HepG2 (cell line): ENCODE measurements at regions of chr17 and their contacts with region 1.

Region 1: GRCh38 chr17:38351412-38352222 is at the start of gene SOCS7:
- DNase-seq: peak; percentile 95
- ATAC-seq: peak; percentile 89
- H3K4me3 ChIP-seq: peak within 1 kb of the TSS; percentile 91 to 95 (median 94)
- H3K27ac ChIP-seq: peak within 1 kb of the TSS; percentile 73
- H3K4me1 ChIP-seq: peaks cover 63% of the 10 kb centered on the region
- H3K27me3 ChIP-seq: no peaks in the 10 kb centered on the region; a peak in 1 of 5 replicates
- CTCF ChIP-seq: peak; percentile 39
- EP300 ChIP-seq: peak in 1 of 2 experiments; percentile 45; a peak in 2 of 4 replicates
- POLR2A ChIP-seq: peak; percentile 96 to 97
- RAD21 ChIP-seq: peak; percentile 67
- total RNA-seq, gene SOCS7: 24.0 and 24.2 TPM in 2 replicates

Region 2: GRCh38 chr17:38379438-38379837 is 27.8 kb after region 1 on chr17:
- CTCF ChIA-PET with region 1: no interaction called
- POLR2A ChIA-PET with region 1: interaction called, 3 read pairs
- in situ Hi-C with region 1: no loop called
- intact Hi-C with region 1: loop called (anchors 2 kb)
- DNase-seq: no peak
- ATAC-seq: no peak
- H3K4me3 ChIP-seq: no peak overlapping the region
- H3K27ac ChIP-seq: no peak overlapping the region
- H3K4me1 ChIP-seq: no peaks in the 10 kb centered on the region
- H3K27me3 ChIP-seq: no peaks in the 10 kb centered on the region; a peak in 1 of 5 replicates
- CTCF ChIP-seq: no peak
- EP300 ChIP-seq: no peak
- POLR2A ChIP-seq: no peak
- RAD21 ChIP-seq: no peak

Region 3: GRCh38 chr17:38410201-38410600 is 58.6 kb after region 1 on chr17:
- CTCF ChIA-PET with region 1: interaction called, 51 read pairs
- POLR2A ChIA-PET with region 1: interaction called, 158 read pairs
- in situ Hi-C with region 1: loop called (anchors 5 kb)
- intact Hi-C with region 1: loop called (anchors 1 kb)
- DNase-seq: no peak
- ATAC-seq: no peak
- H3K4me3 ChIP-seq: no peak overlapping the region
- H3K27ac ChIP-seq: no peak overlapping the region
- H3K4me1 ChIP-seq: 0 out of 2 replicates have a peak, but pooled peaks cover 5% of the 10 kb centered on the region
- H3K27me3 ChIP-seq: peaks cover 0 to 11% of the 10 kb centered on the region in 2 experiments; a peak in 2 of 5 replicates
- CTCF ChIP-seq: no peak
- EP300 ChIP-seq: no peak
- POLR2A ChIP-seq: no peak
- RAD21 ChIP-seq: no peak

Region 4: DNA sequence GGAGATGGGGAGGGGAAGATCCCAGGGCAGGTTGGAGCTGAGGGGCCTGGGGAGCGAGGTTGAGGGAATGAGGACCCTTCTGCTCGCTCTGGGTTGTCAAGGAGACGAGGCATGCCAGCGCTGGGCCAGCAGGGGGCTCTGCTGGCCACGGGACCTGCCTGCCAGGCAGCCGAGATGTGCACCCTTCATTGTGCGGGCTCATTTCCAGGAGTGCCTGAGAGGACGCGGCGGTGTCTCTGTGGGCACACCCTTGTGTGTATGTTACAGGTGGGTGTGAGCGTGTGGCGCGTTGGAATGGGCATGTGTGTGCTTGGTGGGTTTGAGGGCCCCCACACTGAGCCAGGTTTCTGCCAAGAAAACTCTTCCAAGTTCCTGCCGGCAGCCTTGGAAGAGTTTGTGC is 92.5 kb after region 1 on chr17:
- CTCF ChIA-PET with region 1: no interaction called
- POLR2A ChIA-PET with region 1: no interaction called
- in situ Hi-C with region 1: no loop called
- intact Hi-C with region 1: no loop called
- DNase-seq: peak; percentile 57
- ATAC-seq: peak; percentile 95
- H3K4me3 ChIP-seq: no peak overlapping the region
- H3K27ac ChIP-seq: no peak overlapping the region
- H3K4me1 ChIP-seq: peaks cover 4% of the 10 kb centered on the region
- H3K27me3 ChIP-seq: peaks cover 7 to 63% of the 10 kb centered on the region in 2 experiments; a peak in 4 of 5 replicates
- CTCF ChIP-seq: peak; percentile 98
- EP300 ChIP-seq: no peak
- POLR2A ChIP-seq: no peak
- RAD21 ChIP-seq: peak; percentile 96